CD14-positive monocyte (primary cell): ENCODE measurements at regions of chr21 and their contacts with region 1.

Region 1: GRCh38 chr21:28421716-28422524 is 570.8 kb downstream of the LTN1 start:
- DNase-seq: no peak
- H3K4me3 ChIP-seq: no peak overlapping the region
- H3K4me3 Mint-ChIP-seq: no peak overlapping the region
- H3K27ac ChIP-seq: no peak overlapping the region
- H3K27ac Mint-ChIP-seq: no peak overlapping the region
- H3K4me1 ChIP-seq: no peaks in the 10 kb centered on the region
- H3K4me1 Mint-ChIP-seq: no peaks in the 10 kb centered on the region
- H3K27me3 ChIP-seq: no peaks in the 10 kb centered on the region
- H3K27me3 Mint-ChIP-seq: no peaks in the 10 kb centered on the region
- CTCF ChIP-seq: no peak

Region 2: GRCh38 chr21:28357743-28358142 is 64.2 kb before region 1 on chr21:
- intact Hi-C with region 1: loop called in 1 of 2 experiments (anchors 10 kb)
- DNase-seq: no peak
- H3K4me3 ChIP-seq: no peak overlapping the region
- H3K4me3 Mint-ChIP-seq: no peak overlapping the region
- H3K27ac ChIP-seq: no peak overlapping the region
- H3K27ac Mint-ChIP-seq: no peak overlapping the region
- H3K4me1 ChIP-seq: no peaks in the 10 kb centered on the region
- H3K4me1 Mint-ChIP-seq: peaks cover 2% of the 10 kb centered on the region
- H3K27me3 ChIP-seq: no peaks in the 10 kb centered on the region
- H3K27me3 Mint-ChIP-seq: peaks cover 0 to 2% (median 0%) of the 10 kb centered on the region in 3 donors
- CTCF ChIP-seq: no peak

Region 3: GRCh38 chr21:28375708-28376385 is 46.1 kb before region 1 on chr21:
- intact Hi-C with region 1: no loop called
- DNase-seq: no peak
- H3K4me3 ChIP-seq: no peak overlapping the region
- H3K4me3 Mint-ChIP-seq: no peak overlapping the region
- H3K27ac ChIP-seq: no peak overlapping the region
- H3K27ac Mint-ChIP-seq: no peak overlapping the region
- H3K4me1 ChIP-seq: no peaks in the 10 kb centered on the region
- H3K4me1 Mint-ChIP-seq: no peaks in the 10 kb centered on the region
- H3K27me3 ChIP-seq: no peaks in the 10 kb centered on the region
- H3K27me3 Mint-ChIP-seq: no peaks in the 10 kb centered on the region
- CTCF ChIP-seq: no peak

Region 4: GRCh38 chr21:29258626-29259335 is 836.9 kb after region 1 on chr21:
- intact Hi-C with region 1: no loop called
- DNase-seq: no peak
- H3K4me3 ChIP-seq: no peak overlapping the region
- H3K4me3 Mint-ChIP-seq: no peak overlapping the region
- H3K27ac ChIP-seq: no peak overlapping the region
- H3K27ac Mint-ChIP-seq: peak overlapping the region in 3 of 7 donors; percentile 13 to 37 (median 14)
- H3K4me1 ChIP-seq: peaks cover 28 to 41% of the 10 kb centered on the region in 2 donors
- H3K4me1 Mint-ChIP-seq: peaks cover 39% of the 10 kb centered on the region
- H3K27me3 ChIP-seq: no peaks in the 10 kb centered on the region
- H3K27me3 Mint-ChIP-seq: no peaks in the 10 kb centered on the region
- CTCF ChIP-seq: no peak